ENCODE measurements at regions of chr1 and their contacts with region 1.

Region 1: GRCh38 chr1:117128323-117129079 is 7.0 kb upstream of the TRIM45 start:
- DNase-seq: no peak
- ATAC-seq: peak; percentile 66 to 87 (median 82)
- H3K4me3 ChIP-seq: peak overlapping the region in 7 of 12 donors; percentile 1 to 30 (median 15)
- H3K27ac ChIP-seq: peak overlapping the region in 11 of 12 donors; percentile 0 to 78 (median 61)
- H3K4me1 ChIP-seq: peaks cover 0 to 24% (median 6%) of the 10 kb centered on the region in 12 donors
- H3K27me3 ChIP-seq: no peaks in the 10 kb centered on the region
- CTCF ChIP-seq: peak; percentile 26 to 66 (median 54)
- POLR2A ChIP-seq: no peak

Region 2: GRCh38 chr1:117093870-117094621 is 34.5 kb before region 1 on chr1:
- intact Hi-C with region 1: loop called in 2 of 10 experiments (anchors 2 to 5 kb)
- DNase-seq: no peak
- ATAC-seq: peak in 1 of 4 donors; percentile 35
- H3K4me3 ChIP-seq: no peak overlapping the region
- H3K27ac ChIP-seq: peak overlapping the region in 1 of 12 donors; percentile 46
- H3K4me1 ChIP-seq: peaks cover 0 to 23% (median 9%) of the 10 kb centered on the region in 12 donors
- H3K27me3 ChIP-seq: no peaks in the 10 kb centered on the region
- CTCF ChIP-seq: peak in 4 of 12 donors; percentile 7 to 30 (median 19)
- POLR2A ChIP-seq: no peak

Region 3: GRCh38 chr1:117284399-117285215 is 156.1 kb after region 1 on chr1:
- intact Hi-C with region 1: loop called in 8 of 10 experiments (anchors 2 to 10 kb)
- DNase-seq: no peak
- ATAC-seq: peak; percentile 55 to 80 (median 72)
- H3K4me3 ChIP-seq: no peak overlapping the region
- H3K27ac ChIP-seq: no peak overlapping the region
- H3K4me1 ChIP-seq: no peaks in the 10 kb centered on the region
- H3K27me3 ChIP-seq: no peaks in the 10 kb centered on the region
- CTCF ChIP-seq: peak; percentile 16 to 66 (median 54)
- POLR2A ChIP-seq: no peak

Region 4: GRCh38 chr1:117359561-117360289 is 231.2 kb after region 1 on chr1:
- intact Hi-C with region 1: no loop called
- DNase-seq: no peak
- ATAC-seq: no peak
- H3K4me3 ChIP-seq: no peak overlapping the region
- H3K27ac ChIP-seq: no peak overlapping the region
- H3K4me1 ChIP-seq: peaks cover 0 to 13% (median 2%) of the 10 kb centered on the region in 12 donors
- H3K27me3 ChIP-seq: no peaks in the 10 kb centered on the region
- CTCF ChIP-seq: no peak
- POLR2A ChIP-seq: no peak

Measured in heart left ventricle (tissue), 16 donors.